CD4-positive, alpha-beta T cell (primary cell): ENCODE measurements at regions of chr5 and their contacts with region 1.

Region 1: DNA sequence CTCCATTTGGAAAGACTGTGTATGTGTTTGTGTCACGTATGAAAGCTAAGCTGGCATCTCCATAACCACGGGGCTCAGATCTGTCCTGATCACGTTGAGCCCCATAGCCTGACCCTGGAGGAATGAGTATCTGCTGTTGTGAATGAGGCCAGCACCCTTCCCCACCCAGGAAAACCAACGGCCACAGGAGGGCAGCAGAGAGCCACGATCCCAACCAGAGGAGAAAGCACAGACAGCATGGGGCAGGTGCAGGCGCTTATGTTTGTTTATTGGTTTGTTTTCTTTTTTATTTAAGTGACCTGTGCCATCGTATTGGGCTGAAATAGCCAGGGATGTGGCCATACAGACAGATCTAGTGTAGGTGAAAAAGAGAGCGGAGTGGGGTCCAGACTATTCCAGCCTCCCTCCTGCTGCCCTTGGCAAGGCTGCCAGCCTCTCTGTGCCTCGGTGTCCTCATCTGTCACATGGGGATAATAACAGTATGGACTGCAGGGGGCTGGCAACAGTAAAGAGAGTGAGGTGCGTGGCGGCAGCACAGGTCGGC is 12.0 kb downstream of the OR2V2 start:
- DNase-seq: peak; percentile 84 to 97 (median 92)
- ATAC-seq: peak; percentile 62
- H3K4me3 ChIP-seq: no peak overlapping the region
- H3K4me3 Mint-ChIP-seq: peak overlapping the region; percentile 92
- H3K27ac ChIP-seq: peak overlapping the region; percentile 91 to 98
- H3K27ac Mint-ChIP-seq: peak overlapping the region; percentile 98
- H3K4me1 ChIP-seq: peaks cover 26% of the 10 kb centered on the region
- H3K4me1 Mint-ChIP-seq: peaks cover 26% of the 10 kb centered on the region
- H3K27me3 ChIP-seq: peaks cover 2 to 3% of the 10 kb centered on the region in 2 experiments
- H3K27me3 Mint-ChIP-seq: peaks cover 16% of the 10 kb centered on the region
- CTCF ChIP-seq: peak; percentile 88

Region 2: DNA sequence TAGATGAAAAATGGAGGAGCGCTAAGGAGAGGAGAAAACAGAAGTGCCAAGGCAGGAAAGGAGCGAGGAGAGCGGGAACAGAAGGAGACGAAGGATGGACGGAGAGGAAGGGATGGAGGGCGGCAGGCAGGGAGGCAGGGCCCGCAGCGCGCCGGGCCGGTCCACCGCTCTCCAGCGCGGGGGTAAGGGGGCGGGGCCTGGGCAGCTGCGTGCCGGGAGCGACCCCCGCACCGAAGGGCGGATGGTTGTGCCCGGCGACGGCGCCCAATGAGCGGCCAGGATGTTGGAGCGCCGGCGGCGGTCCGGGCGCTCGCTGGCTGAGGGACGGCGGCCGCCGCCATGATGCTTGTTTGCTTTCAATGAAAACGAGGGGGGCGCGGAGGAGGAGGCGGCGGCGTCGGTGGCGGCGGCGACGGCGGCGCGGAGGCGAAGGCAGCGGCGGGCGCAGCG is 665.3 kb before region 1 on chr5 and contains the start of gene CNOT6:
- CTCF ChIA-PET with region 1: no interaction called
- POLR2A ChIA-PET with region 1: no interaction called
- intact Hi-C with region 1: loop called in 1 of 2 experiments (anchors 10 kb)
- DNase-seq: peak; percentile 89 to 99 (median 94)
- ATAC-seq: peak; percentile 88
- H3K4me3 ChIP-seq: peak within 1 kb of the TSS; percentile 73
- H3K4me3 Mint-ChIP-seq: peak within 1 kb of the TSS; percentile 100
- H3K27ac ChIP-seq: peak within 1 kb of the TSS; percentile 60 to 83
- H3K27ac Mint-ChIP-seq: peak within 1 kb of the TSS; percentile 98
- H3K4me1 ChIP-seq: peaks cover 34% of the 10 kb centered on the region
- H3K4me1 Mint-ChIP-seq: peaks cover 40% of the 10 kb centered on the region
- H3K27me3 ChIP-seq: no peaks in the 10 kb centered on the region
- H3K27me3 Mint-ChIP-seq: no peaks in the 10 kb centered on the region
- CTCF ChIP-seq: no peak
- total RNA-seq, gene CNOT6: 12.5 to 13.8 TPM

Region 3: GRCh38 chr5:180810210-180810958 is 349.0 kb before region 1 on chr5:
- CTCF ChIA-PET with region 1: no interaction called
- POLR2A ChIA-PET with region 1: interaction called, 3 read pairs
- intact Hi-C with region 1: loop called in 1 of 2 experiments (anchors 10 kb)
- DNase-seq: peak; percentile 94 to 98 (median 97)
- ATAC-seq: peak; percentile 76
- H3K4me3 ChIP-seq: peak overlapping the region; percentile 80
- H3K4me3 Mint-ChIP-seq: peak overlapping the region; percentile 91
- H3K27ac ChIP-seq: peak overlapping the region; percentile 95 to 98
- H3K27ac Mint-ChIP-seq: peak overlapping the region; percentile 94
- H3K4me1 ChIP-seq: peaks cover 58% of the 10 kb centered on the region
- H3K4me1 Mint-ChIP-seq: peaks cover 87% of the 10 kb centered on the region
- H3K27me3 ChIP-seq: no peaks in the 10 kb centered on the region
- H3K27me3 Mint-ChIP-seq: no peaks in the 10 kb centered on the region
- CTCF ChIP-seq: no peak

Region 4: GRCh38 chr5:181173420-181174342 is 14.3 kb after region 1 on chr5:
- CTCF ChIA-PET with region 1: interaction called, 3 read pairs
- POLR2A ChIA-PET with region 1: interaction called, 12 read pairs
- intact Hi-C with region 1: loop called in 1 of 2 experiments (anchors 2 kb)
- DNase-seq: peak in 9 of 14 experiments; percentile 17 to 76 (median 55)
- ATAC-seq: peak; percentile 84
- H3K4me3 ChIP-seq: peak overlapping the region; percentile 25
- H3K4me3 Mint-ChIP-seq: peak overlapping the region; percentile 92
- H3K27ac ChIP-seq: no peak overlapping the region
- H3K27ac Mint-ChIP-seq: peak overlapping the region; percentile 78
- H3K4me1 ChIP-seq: peaks cover 33% of the 10 kb centered on the region
- H3K4me1 Mint-ChIP-seq: peaks cover 44% of the 10 kb centered on the region
- H3K27me3 ChIP-seq: peaks cover 21 to 45% of the 10 kb centered on the region in 2 experiments
- H3K27me3 Mint-ChIP-seq: peaks cover 44% of the 10 kb centered on the region
- CTCF ChIP-seq: peak; percentile 10

Region 5: DNA sequence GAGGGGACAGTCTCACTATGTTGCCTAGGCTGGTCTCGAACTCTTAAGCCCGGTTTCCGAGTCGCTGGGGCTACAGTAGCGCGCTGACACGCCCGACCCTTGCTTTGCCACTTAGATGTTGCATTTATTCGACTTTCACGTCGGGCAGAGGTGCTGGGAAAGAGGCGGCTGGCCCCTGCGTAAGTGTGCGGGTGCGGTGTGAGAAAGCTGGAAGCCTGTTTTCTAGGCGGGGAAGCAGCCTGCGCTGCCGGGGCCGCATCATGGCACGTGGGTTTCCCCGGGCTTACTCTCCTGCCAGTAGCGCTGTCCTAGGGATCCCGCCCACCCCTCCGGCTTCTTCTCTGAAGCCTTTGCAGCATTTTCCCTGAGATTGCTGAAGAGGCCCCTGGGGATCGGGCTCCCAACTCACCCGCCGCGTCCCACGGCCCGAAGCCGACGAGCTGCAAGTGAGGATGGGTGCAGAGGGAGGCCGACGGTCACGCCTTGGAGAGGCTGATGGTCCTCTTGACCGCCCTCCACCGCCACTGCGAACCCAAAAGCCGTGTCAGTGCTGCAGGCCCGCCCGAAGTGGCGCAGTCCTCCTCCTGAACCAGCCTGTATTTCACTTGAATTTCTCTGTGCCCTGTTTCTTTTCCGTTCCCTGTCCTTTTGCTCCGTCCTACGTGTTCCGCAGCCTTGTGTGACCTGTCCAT is 57.9 kb after region 1 on chr5:
- CTCF ChIA-PET with region 1: no interaction called
- POLR2A ChIA-PET with region 1: no interaction called
- intact Hi-C with region 1: loop called in 1 of 2 experiments (anchors 10 kb)
- DNase-seq: peak; percentile 36 to 87 (median 61)
- ATAC-seq: peak; percentile 31
- H3K4me3 ChIP-seq: peak overlapping the region; percentile 81
- H3K4me3 Mint-ChIP-seq: peak overlapping the region; percentile 97
- H3K27ac ChIP-seq: peak overlapping the region; percentile 39 to 41
- H3K27ac Mint-ChIP-seq: peak overlapping the region; percentile 88
- H3K4me1 ChIP-seq: peaks cover 56% of the 10 kb centered on the region
- H3K4me1 Mint-ChIP-seq: peaks cover 41% of the 10 kb centered on the region
- H3K27me3 ChIP-seq: no peaks in the 10 kb centered on the region
- H3K27me3 Mint-ChIP-seq: peaks cover 20% of the 10 kb centered on the region
- CTCF ChIP-seq: no peak